ENCODE measurements at regions of chr5 and their contacts with region 1.

Region 1: DNA sequence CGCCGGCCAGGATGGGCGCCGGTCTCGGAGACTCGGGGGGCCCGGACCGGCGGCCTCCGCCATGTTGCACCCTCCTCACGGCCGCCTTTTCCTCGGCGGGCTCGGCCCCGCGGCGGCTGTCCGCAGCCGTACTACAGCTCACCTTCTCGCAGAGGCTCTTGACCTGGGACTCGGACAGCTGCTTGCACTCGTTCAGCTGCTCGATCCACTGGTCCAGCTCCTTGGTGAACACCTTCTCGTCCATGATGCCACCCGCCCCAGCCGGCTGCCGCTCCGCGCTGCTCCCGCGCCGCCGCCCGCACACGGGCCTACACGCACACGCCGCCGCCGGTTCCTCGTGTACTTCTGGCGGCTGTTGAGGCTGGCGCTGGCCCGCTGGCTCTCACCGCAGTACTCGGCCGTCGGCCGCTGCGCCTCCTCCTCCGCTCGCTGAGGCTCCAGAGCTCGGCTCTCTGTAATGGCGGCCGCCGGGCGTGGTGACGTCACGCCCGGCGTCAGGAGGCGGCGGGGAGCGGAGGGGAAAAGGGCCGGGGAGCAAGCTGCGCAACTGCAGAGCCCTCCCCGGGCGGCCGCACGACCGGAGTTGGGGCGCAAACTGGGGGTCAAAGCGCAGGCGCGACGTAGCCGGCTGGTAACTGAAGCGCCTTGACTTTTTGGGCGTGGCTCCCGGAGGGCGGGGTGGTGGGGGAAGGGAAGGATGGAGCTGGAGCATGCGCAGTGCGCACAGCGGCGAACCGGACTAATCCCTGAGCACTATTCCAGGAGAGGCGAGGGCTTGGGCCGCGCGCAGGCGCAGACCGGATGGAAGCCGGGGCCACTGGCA is at the start of gene PPP2CA:
- DNase-seq: peak; percentile 97 to 100 (median 99)

Region 2: GRCh38 chr5:134073404-134073803 is 152.4 kb before region 1 on chr5:
- intact Hi-C with region 1: no loop called
- DNase-seq: no peak

Region 3: DNA sequence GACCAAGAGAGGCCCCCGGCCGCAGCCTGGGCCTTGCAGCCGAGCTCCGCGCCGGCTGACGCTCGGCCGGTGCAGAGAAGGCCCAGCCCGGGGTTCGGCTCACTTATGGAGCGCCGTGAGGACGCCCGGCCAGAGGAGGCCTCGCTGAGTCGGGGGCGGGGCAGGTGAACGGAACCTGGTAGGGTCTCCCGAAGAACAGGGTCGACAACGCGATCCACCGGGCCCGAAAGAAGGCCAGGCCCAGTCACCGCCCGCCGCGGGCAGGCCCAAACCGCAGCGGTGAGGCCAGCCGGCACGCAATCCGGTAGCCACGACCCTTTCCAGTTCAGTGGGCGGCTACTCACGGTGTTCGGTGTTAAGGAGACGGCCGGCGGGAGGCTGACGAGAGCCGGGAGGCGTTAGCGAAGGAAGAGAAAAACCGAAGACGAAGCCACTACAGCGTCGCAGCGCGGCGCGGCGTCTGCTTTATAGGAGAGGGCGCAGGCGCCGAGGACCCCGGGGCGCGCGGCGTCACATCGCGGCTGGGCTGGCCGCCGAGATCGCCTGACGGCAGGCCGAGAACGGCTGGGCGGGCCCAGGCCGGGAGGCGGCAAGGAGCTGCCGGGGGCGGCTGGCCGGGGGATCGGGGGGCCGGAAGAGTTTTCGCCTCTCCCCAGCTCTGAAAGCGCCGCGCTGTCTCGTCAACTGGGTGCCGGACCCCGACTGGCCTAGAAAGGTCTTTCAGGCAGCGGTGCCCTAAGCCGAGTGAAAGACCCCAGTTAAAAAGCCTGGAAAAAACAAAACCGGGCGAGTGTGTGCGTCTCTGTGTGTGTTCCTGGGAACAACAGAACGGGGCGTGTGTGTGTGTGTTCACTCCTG is 49.1 kb before region 1 on chr5 and contains the start of gene SKP1:
- intact Hi-C with region 1: loop called (anchors 5 kb)
- DNase-seq: peak; percentile 59 to 91 (median 84)

Region 4: DNA sequence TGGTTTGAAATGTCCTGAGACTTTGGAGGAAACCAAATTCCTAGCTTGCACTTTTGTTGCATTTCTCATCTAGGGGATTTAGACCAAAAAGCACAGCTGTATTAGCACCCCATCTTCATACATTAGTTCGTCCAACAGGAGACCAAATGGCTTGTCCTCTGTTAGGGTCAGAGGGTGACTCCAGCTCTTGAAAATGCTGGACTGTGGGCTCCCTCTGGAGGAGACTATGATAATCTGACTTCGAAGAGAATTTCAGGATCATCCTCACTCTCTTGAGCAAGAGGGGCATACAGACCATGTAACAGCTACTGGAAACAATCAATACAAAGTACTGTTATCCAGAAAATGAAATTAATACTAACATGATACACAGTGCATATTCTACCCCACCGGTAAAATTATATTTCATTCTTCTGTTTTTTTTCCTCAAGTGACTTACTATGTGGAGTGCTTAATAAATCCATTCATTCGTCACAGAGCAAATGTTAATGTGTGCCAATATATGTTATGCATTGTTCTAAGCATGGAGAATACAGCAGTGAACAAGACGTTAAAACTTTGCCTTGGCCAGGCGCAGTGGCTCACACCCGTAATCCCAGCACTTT is 63.8 kb after region 1 on chr5:
- intact Hi-C with region 1: loop called (anchors 5 kb)
- DNase-seq: peak in 37 of 42 donors; percentile 10 to 84 (median 60)

Region 5: GRCh38 chr5:134370871-134371833 is 145.3 kb after region 1 on chr5 and contains the start of gene UBE2B:
- intact Hi-C with region 1: loop called (anchors 5 kb)
- DNase-seq: peak; percentile 95 to 100 (median 99)